ENCODE measurements at regions of chr7 and their contacts with region 1.

Region 1: DNA sequence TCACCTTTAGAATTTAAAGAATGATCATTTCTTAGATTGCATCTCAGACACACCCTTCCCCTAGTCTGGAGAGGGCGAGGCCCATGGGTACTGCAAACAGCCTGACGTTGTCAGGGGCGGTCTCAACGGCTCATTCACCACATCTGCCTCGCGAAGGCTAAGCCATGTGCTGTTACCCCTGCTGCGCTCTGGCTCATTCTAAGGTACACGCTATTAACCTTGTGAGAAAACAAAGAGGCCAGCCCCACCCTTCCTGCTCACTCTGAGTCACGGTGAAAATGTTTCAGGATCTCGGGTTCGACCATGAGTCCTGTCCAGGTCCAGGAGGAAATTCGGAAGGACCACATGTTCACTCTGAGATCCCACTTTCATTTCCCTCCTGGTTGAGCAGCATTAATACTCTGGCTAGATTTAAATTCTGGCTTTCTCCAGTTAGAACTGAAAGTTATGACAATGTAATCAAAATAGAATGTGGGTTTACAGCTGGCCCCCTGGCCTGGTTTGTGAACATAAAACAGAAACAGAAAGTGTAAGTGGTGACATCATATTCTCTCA is 55.2 kb downstream of the EGFR start:
- DNase-seq: peak; percentile 10
- H3K4me3 Mint-ChIP-seq: no peak overlapping the region
- H3K27ac Mint-ChIP-seq: peak overlapping the region; percentile 61
- H3K4me1 Mint-ChIP-seq: peaks cover 13% of the 10 kb centered on the region
- H3K27me3 Mint-ChIP-seq: peaks cover 6% of the 10 kb centered on the region

Region 2: GRCh38 chr7:54995631-54996340 is 78.2 kb before region 1 on chr7:
- CTCF ChIA-PET with region 1: no interaction called
- intact Hi-C with region 1: loop called (anchors 1 kb)
- DNase-seq: peak; percentile 59
- H3K4me3 Mint-ChIP-seq: no peak overlapping the region
- H3K27ac Mint-ChIP-seq: peak overlapping the region; percentile 87
- H3K4me1 Mint-ChIP-seq: peaks cover 25% of the 10 kb centered on the region
- H3K27me3 Mint-ChIP-seq: peaks cover 5% of the 10 kb centered on the region

Region 3: GRCh38 chr7:55086413-55087201 is 12.6 kb after region 1 on chr7:
- CTCF ChIA-PET with region 1: no interaction called
- intact Hi-C with region 1: loop called (anchors 1 kb)
- DNase-seq: peak; percentile 27
- H3K4me3 Mint-ChIP-seq: no peak overlapping the region
- H3K27ac Mint-ChIP-seq: no peak overlapping the region
- H3K4me1 Mint-ChIP-seq: peaks cover 14% of the 10 kb centered on the region
- H3K27me3 Mint-ChIP-seq: peaks cover 11% of the 10 kb centered on the region

Region 4: DNA sequence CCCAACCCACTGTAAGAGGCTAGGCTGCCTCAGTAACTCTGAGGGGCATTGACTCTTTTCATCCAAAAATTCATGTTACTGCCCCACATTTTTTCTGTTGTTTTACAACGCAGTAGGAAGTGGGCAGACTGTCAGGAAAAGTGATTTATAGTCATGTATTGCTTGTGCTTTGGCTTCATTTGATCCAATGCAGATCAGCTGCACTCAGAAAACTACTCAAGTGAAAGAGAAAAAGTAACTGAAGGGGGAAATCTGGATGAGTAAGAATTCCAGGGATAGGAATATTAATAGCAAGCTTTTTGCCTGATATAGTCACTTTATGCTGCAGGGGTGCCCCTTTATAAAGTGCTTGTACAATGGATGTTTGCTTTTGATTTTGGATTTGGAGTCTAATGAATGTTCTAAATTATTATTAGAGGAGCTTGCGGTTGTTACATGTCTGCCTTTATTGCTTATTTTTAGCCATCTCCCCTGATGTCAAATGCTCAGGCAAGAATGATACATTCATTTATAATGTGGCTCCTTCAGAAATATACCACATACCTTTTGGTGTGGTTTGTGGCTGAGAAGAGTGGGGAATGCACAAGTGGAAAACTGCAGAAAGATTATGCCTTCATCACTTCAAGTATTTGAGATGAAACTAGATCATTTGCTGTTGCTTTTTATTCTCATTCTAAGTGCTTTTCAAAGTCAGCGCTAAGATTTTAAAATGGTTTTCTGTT is 30.9 kb after region 1 on chr7:
- CTCF ChIA-PET with region 1: no interaction called
- intact Hi-C with region 1: loop called (anchors 1 kb)
- DNase-seq: no peak
- H3K4me3 Mint-ChIP-seq: no peak overlapping the region
- H3K27ac Mint-ChIP-seq: no peak overlapping the region
- H3K4me1 Mint-ChIP-seq: peaks cover 5% of the 10 kb centered on the region
- H3K27me3 Mint-ChIP-seq: peaks cover 59% of the 10 kb centered on the region